T-cell (primary cell): ENCODE measurements at regions of chr16 and their contacts with region 1.

Region 1: DNA sequence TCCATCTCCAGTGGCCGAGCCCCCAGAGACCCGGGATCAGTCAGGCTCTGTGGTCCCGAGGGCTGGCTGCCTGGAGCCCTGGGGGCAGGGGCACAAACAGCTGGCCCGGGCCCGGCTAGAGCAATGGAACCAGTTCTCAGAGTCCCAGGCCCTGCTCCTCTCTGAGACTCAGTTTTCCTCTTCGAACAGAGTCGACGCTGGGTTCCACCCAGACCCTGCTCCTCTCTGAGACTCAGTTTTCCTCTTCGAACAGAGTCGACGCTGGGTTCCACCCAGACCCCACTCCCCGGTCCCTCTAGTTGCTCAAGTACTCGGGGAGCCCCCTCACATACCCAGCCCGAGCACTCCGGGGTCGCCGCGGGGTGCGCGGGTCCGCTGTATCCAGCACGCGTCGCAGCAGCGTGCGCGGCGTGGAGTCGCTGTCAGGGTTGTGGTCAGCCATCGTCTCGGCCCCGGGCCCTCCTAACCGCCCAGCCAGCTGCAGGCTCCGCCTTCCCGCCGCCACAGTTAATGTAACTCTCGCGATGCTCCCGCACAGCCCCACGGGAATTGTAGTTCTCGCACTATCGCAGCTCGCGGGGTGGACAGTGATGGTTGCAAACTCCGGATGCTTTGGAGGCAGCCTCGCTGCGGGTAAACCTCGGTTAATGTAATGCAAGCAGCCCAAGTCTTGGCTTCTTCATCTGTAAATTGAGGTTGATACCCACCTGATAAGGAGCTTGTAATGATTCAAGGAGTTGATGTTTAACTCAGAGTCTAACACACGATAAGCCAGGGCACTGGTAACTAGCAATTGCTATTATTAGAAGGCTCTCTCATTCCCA is 8.5 kb upstream of the THAP11 start:
- DNase-seq: peak; percentile 81 to 96 (median 91)
- ATAC-seq: peak; percentile 100
- H3K4me3 ChIP-seq: peak overlapping the region; percentile 72 to 74
- H3K4me3 Mint-ChIP-seq: peak overlapping the region; percentile 87 to 91 (median 90)
- H3K27ac ChIP-seq: peak overlapping the region; percentile 17
- H3K27ac Mint-ChIP-seq: peak overlapping the region; percentile 69 to 79
- H3K4me1 ChIP-seq: peaks cover 7 to 22% of the 10 kb centered on the region in 2 experiments
- H3K4me1 Mint-ChIP-seq: peaks cover 0 to 16% (median 15%) of the 10 kb centered on the region in 3 donors
- H3K27me3 ChIP-seq: no peaks in the 10 kb centered on the region
- H3K27me3 Mint-ChIP-seq: no peaks in the 10 kb centered on the region

Region 2: DNA sequence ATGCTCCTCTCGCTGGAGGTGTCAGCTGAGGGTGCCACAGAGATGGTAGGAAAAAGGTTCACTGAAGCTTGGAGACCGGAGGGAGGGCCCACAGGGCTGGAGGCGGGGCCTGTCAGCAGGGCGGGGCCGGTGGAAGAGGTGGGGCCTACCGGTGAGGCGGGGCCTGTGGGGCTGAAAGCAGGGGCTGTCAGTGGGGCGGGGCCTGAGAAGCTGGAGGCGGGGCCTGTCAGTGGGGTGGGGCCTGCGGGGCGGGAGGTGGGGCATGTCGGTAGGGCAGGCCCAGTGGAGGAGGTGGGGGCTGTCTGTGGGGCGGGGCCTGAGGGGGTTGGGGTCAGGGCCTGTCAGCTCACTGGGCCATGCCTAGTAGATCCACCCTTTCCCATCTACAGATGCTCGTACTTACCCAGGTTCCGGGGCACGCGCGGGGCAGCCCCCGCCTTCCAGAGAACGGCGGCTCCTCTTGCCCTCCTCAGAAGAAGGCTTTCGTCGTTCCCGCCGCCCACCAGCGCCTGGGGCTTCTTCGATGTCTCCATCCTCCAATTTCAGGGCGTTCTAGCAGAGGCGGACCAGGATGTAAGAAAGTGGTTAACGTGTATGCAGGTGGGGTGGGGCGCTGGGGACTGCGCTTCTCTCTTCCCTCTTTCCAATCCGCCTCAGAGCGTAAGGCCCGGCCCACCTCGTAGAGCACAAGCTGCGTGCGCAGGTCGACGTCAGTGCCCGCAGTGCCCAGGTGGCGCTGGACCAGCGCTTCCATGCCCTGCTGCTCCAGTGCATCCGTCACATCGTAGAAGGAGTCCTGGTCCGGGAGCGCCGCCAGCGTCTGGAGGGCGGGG is 596.9 kb before region 1 on chr16:
- CTCF ChIA-PET with region 1: no interaction called
- POLR2A ChIA-PET with region 1: no interaction called
- DNase-seq: peak; percentile 30 to 79 (median 63)
- ATAC-seq: peak; percentile 65 to 82 (median 72)
- H3K4me3 ChIP-seq: peak overlapping the region in 1 of 2 donors; percentile 27
- H3K4me3 Mint-ChIP-seq: peak overlapping the region; percentile 43 to 72 (median 57)
- H3K27ac ChIP-seq: peak overlapping the region; percentile 57
- H3K27ac Mint-ChIP-seq: peak overlapping the region; percentile 91 to 92
- H3K4me1 ChIP-seq: peaks cover 0 to 26% of the 10 kb centered on the region in 2 experiments
- H3K4me1 Mint-ChIP-seq: peaks cover 0 to 18% (median 9%) of the 10 kb centered on the region in 3 donors
- H3K27me3 ChIP-seq: no peaks in the 10 kb centered on the region
- H3K27me3 Mint-ChIP-seq: no peaks in the 10 kb centered on the region

Region 3: DNA sequence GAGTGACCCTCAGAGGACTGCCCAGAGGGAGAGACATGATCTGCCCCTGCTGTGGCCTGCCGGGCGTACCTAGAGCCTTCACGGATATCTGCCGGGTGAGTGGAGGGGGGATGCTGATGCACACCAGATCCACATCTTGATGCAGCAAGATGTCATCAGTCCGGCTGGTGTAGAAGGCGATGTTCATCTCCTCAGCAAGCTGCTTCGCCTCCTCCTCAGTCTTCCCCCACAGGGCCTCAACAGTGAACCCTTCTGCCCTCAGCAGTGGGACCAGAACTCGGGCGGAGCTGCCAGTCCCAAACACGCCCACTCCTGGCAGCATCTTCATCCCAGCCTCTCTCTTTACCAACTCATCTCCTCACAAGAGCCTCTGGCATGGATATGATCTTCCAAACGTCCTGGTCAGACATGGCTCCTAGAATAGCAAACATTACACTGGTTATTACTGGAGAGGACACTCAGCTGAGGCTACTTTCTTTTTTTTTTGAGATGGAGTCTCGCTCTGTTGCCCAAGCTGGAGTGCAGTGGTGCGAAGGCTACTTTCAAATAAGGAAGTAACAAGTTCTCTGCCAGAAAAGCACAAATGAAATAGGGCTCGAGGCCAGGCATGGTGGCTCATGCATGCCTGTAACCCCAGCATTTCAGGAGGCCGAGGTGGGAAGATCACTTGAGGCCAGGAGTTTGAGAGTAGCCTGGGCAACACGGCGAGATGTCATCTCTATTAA is 148.1 kb before region 1 on chr16:
- CTCF ChIA-PET with region 1: no interaction called
- POLR2A ChIA-PET with region 1: no interaction called
- DNase-seq: no peak
- ATAC-seq: no peak
- H3K4me3 ChIP-seq: no peak overlapping the region
- H3K4me3 Mint-ChIP-seq: no peak overlapping the region
- H3K27ac ChIP-seq: peak overlapping the region; percentile 38
- H3K27ac Mint-ChIP-seq: peak overlapping the region; percentile 86 to 90
- H3K4me1 ChIP-seq: peaks cover 3 to 19% of the 10 kb centered on the region in 2 experiments
- H3K4me1 Mint-ChIP-seq: peaks cover 0 to 25% (median 14%) of the 10 kb centered on the region in 3 donors
- H3K27me3 ChIP-seq: no peaks in the 10 kb centered on the region
- H3K27me3 Mint-ChIP-seq: no peaks in the 10 kb centered on the region

Region 4: DNA sequence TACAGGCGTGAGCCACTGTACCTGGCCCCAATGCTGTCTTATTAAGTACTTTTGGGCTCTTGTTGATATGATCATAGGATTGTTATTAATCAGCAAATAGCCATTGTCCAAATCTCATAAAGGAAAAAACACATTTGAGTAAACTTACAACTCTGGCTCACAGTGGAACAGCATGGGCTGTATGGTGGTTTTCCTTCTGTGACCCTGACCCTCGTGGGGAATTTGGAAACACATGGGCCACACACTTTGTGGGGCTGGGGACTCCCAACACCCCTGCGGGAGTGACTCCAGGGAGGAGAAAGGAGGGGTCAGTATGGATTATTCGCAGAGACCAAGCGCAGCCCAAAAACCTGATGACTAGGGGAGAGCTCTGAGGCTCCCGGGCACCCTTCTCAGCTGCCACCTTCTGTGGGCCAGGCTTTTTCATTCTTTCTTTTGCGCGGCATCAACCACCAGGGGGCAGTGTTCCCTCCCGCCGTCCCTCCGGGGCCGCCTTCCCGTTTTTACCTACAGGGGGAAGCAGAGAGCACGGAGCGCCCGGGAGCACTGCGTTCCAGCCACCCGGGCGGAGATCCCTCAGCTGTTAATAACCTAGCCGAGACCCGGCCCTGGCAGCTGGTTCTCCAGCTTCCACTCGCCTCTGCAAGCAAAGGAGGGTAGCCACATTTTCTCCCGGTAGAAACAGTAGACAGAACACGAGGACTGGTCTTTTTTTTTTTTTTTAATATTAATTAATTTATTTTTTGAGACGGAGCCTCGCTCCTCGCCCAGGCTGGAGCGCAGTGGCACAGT is 17.2 kb before region 1 on chr16:
- CTCF ChIA-PET with region 1: interaction called in 1 of 2 experiments, 13 read pairs
- POLR2A ChIA-PET with region 1: no interaction called
- DNase-seq: peak; percentile 67 to 94 (median 86)
- ATAC-seq: peak; percentile 93 to 98 (median 96)
- H3K4me3 ChIP-seq: no peak overlapping the region
- H3K4me3 Mint-ChIP-seq: peak overlapping the region in 1 of 3 donors; percentile 39
- H3K27ac ChIP-seq: no peak overlapping the region
- H3K27ac Mint-ChIP-seq: peak overlapping the region in 1 of 2 donors; percentile 27
- H3K4me1 ChIP-seq: peaks cover 0 to 8% of the 10 kb centered on the region in 2 experiments
- H3K4me1 Mint-ChIP-seq: peaks cover 5 to 9% (median 5%) of the 10 kb centered on the region in 3 donors
- H3K27me3 ChIP-seq: peaks cover 0 to 5% of the 10 kb centered on the region in 2 experiments
- H3K27me3 Mint-ChIP-seq: no peaks in the 10 kb centered on the region

Region 5: DNA sequence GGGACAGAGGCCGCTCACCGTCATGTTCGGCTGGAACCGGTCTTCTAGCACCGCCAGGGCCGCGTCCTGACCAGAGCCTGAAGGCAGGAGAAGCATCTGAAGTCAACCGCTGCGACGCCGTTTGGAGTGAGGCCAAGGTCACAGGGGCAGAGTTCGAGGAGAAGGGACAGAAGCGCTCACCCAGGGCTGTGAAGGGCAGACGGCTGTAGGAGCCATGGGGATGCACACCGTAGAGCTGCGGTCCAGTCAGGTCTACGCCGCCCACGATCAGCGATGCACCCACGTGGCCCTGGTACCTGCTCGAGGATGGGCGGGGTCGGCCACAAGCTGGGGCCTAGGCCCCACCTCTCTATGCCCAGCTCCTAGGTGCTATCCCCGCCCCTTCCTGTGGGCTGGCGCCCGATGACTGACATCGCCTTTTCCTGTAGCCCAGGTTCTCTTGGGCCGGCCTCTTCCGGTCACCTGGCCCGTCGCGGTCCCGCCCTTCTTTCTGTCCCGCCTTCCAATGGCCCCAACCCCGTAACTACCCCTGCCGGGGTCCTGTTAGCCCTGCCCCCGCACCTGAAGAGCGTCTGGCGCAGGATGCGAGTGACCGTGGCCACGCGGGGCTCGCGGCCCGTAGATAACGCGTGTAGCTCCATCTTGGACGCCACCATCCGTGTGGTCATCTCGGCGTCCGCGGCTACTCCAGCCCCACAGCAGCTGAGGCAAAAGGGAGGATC is 101.9 kb after region 1 on chr16:
- CTCF ChIA-PET with region 1: no interaction called
- POLR2A ChIA-PET with region 1: interaction called in 1 of 2 experiments, 11 read pairs
- DNase-seq: peak; percentile 82 to 97 (median 95)
- ATAC-seq: peak; percentile 89 to 91 (median 90)
- H3K4me3 ChIP-seq: peak overlapping the region; percentile 95 to 97
- H3K4me3 Mint-ChIP-seq: peak overlapping the region; percentile 98 to 99 (median 99)
- H3K27ac ChIP-seq: peak overlapping the region; percentile 82
- H3K27ac Mint-ChIP-seq: peak overlapping the region; percentile 99
- H3K4me1 ChIP-seq: peaks cover 6 to 47% of the 10 kb centered on the region in 2 experiments
- H3K4me1 Mint-ChIP-seq: peaks cover 38 to 48% (median 44%) of the 10 kb centered on the region in 3 donors
- H3K27me3 ChIP-seq: no peaks in the 10 kb centered on the region
- H3K27me3 Mint-ChIP-seq: no peaks in the 10 kb centered on the region

Region 6: DNA sequence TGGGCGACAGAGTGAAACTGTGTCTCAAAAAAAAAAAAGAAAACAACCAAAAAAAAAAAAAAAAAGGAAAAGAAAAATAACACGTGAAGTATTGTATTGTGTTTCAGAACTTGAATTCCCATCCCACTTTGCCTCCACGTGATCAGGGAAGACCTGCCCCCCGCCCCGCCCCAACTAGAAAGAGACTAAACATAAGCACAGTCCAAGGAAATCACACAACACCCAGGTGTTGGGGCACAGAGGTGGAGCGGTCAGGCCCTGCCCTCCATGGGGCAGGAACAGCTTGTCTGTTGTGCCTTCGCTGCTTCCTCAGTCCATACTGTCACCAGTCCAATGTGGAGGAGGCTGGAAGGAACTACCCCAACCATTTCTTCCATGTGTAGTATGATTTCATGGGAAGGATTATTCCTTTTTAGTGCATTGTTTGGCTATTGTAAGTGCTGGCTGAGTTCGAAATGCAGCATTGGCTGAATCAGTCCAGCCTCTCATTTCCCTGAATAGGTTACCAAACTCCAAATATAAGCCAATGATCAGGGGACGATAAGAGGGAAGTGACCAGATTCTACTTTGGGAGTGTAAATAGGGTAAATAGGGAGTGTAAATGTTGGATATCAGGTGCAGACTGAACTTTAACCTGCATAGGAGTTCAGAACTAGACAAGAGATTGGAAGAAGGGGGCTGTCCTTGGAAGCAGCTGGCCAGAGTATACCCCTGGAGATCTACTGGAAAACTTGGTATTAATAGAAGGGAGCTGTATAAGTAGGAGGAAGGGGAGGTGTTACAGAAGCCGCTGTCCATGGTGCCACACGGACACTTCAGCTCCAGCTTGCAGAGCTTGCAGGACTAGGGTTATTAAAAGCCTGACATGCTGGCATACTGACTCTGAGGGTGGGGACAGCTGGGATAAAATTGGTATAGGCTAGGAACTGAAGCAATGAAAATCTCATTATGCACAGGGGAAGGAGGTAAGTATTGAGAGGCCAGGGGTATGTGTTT is 1060.4 kb after region 1 on chr16:
- CTCF ChIA-PET with region 1: no interaction called
- POLR2A ChIA-PET with region 1: no interaction called
- DNase-seq: no peak
- ATAC-seq: no peak
- H3K4me3 ChIP-seq: no peak overlapping the region
- H3K4me3 Mint-ChIP-seq: no peak overlapping the region
- H3K27ac ChIP-seq: no peak overlapping the region
- H3K27ac Mint-ChIP-seq: no peak overlapping the region
- H3K4me1 ChIP-seq: no peaks in the 10 kb centered on the region
- H3K4me1 Mint-ChIP-seq: peaks cover 0 to 5% (median 4%) of the 10 kb centered on the region in 3 donors
- H3K27me3 ChIP-seq: no peaks in the 10 kb centered on the region
- H3K27me3 Mint-ChIP-seq: no peaks in the 10 kb centered on the region